ENCODE measurements at regions of chr5 and their contacts with region 1.

Region 1: DNA sequence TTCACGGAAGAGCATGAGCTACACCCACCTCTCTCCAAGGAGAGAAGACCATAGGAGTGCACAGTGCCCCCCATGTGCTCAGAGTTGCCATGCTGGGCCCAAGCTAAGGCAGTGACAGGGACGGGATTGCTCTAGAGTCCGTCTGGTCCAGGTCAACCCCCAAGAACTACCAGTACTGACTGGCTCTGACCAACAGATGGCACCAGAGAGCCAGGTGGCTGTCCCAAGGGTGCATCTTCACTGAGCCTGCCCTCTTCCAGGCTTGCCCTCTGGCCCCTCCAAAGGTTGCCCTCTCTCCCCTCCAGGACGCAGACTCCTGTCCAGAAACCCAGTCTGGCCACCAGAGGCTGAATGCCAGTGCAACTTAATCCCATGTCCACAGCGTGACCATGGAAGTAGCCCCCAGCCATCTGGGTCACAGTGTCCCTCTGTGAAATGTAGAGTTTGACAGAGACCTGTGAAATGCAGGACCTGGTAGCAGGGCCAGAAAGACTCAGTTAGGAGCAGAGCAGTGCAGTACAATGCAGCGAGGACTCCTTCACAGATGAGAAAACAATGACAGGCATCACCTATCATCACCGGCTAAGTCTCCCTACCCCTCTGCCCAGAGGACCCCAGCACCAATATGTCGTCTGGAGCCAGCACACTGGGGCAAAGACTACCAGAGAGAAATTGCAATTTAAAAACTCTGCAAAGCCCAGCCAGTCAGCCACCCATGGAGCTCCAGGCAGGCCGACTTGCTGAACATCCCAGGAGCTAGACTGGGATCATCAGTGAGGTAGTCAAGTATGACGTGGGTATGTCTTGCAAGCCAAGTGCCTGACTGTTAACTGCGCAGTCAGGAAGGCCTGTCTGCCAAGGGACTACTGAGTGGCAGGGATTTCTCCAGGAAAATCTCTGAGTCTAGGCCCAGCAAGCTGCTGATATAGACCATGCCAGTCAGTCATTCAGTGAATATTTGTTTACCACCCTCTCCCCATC is 7.7 kb upstream of the SKP1 start:
- DNase-seq: no peak
- H3K4me3 ChIP-seq: no peak overlapping the region
- CTCF ChIP-seq: peak; percentile 92

Region 2: GRCh38 chr5:134073404-134073803 is 111.0 kb before region 1 on chr5:
- CTCF ChIA-PET with region 1: no interaction called
- POLR2A ChIA-PET with region 1: no interaction called
- DNase-seq: no peak
- H3K4me3 ChIP-seq: no peak overlapping the region
- CTCF ChIP-seq: no peak

Region 3: GRCh38 chr5:134195666-134196065 is 11.2 kb after region 1 on chr5:
- CTCF ChIA-PET with region 1: interaction called, 105 read pairs
- POLR2A ChIA-PET with region 1: no interaction called
- DNase-seq: no peak
- H3K4me3 ChIP-seq: no peak overlapping the region
- CTCF ChIP-seq: no peak

Region 4: DNA sequence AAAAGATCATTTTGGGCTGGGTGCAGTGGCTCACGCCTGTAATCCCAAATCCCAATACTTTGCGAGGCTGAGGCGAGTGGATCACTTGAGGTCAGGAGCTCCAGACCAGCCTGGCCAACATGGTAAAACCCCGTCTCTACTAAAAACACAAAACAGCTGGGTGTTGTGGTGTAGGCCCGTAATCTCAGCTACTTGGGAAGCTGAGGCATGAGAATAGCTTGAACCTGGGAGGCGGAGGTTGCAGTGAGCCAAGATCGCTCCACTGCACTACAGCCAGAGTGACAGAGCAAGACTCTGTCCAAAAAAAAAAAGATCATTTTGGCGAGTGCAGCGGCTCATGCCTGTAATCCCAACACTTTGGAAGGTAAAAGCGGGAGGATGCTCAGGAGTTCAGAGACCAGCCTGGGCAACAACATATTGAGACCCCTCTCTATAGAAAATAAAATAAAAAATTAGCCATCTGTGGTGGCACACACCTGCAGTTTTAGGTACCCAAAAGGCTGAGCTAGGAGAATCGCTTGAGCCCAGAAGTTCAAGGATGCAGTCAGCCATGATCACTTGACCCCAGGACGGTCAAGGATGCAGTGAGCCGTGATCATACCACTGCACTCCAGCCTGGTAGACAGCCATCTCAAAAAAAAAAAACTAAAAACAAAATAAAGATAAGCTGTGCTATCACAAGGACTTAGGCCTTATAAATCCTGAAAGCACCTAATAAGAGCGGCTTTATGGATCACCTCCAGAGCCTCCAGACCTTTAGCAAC is 25.2 kb after region 1 on chr5:
- CTCF ChIA-PET with region 1: interaction called, 105 read pairs
- POLR2A ChIA-PET with region 1: interaction called, 3 read pairs
- DNase-seq: no peak
- H3K4me3 ChIP-seq: no peak overlapping the region
- CTCF ChIP-seq: no peak

Region 5: GRCh38 chr5:134281081-134281480 is 96.6 kb after region 1 on chr5:
- CTCF ChIA-PET with region 1: interaction called, 440 read pairs
- POLR2A ChIA-PET with region 1: no interaction called
- DNase-seq: no peak
- H3K4me3 ChIP-seq: no peak overlapping the region
- CTCF ChIP-seq: no peak

Measured in AG04449 (cell line).